A673 (cell line): ENCODE measurements at regions of chr11 and their contacts with region 1.

Region 1: GRCh38 chr11:113994077-113994954 is 19.4 kb downstream of the HTR3A start:
- DNase-seq: peak; percentile 45
- H3K4me3 ChIP-seq: no peak overlapping the region
- H3K27ac ChIP-seq: no peak overlapping the region
- H3K4me1 ChIP-seq: peaks cover 16% of the 10 kb centered on the region
- H3K27me3 ChIP-seq: peaks cover 2% of the 10 kb centered on the region
- CTCF ChIP-seq: peak; percentile 93

Region 2: GRCh38 chr11:113760241-113760640 is 234.1 kb before region 1 on chr11:
- CTCF ChIA-PET with region 1: no interaction called
- POLR2A ChIA-PET with region 1: no interaction called
- intact Hi-C with region 1: no loop called
- DNase-seq: no peak
- H3K4me3 ChIP-seq: no peak overlapping the region
- H3K27ac ChIP-seq: no peak overlapping the region
- H3K4me1 ChIP-seq: no peaks in the 10 kb centered on the region
- H3K27me3 ChIP-seq: no peaks in the 10 kb centered on the region
- CTCF ChIP-seq: no peak

Region 3: GRCh38 chr11:113896156-113896879 is 98.0 kb before region 1 on chr11:
- CTCF ChIA-PET with region 1: interaction called, 4 read pairs
- POLR2A ChIA-PET with region 1: no interaction called
- intact Hi-C with region 1: loop called (anchors 2 kb)
- DNase-seq: peak; percentile 67
- H3K4me3 ChIP-seq: no peak overlapping the region
- H3K27ac ChIP-seq: no peak overlapping the region
- H3K4me1 ChIP-seq: no peaks in the 10 kb centered on the region
- H3K27me3 ChIP-seq: no peaks in the 10 kb centered on the region
- CTCF ChIP-seq: peak; percentile 90

Region 4: GRCh38 chr11:114075891-114076441 is 81.7 kb after region 1 on chr11:
- CTCF ChIA-PET with region 1: no interaction called
- POLR2A ChIA-PET with region 1: no interaction called
- intact Hi-C with region 1: loop called (anchors 5 kb)
- DNase-seq: peak; percentile 88
- H3K4me3 ChIP-seq: no peak overlapping the region
- H3K27ac ChIP-seq: no peak overlapping the region
- H3K4me1 ChIP-seq: peaks cover 85% of the 10 kb centered on the region
- H3K27me3 ChIP-seq: no peaks in the 10 kb centered on the region
- CTCF ChIP-seq: peak; percentile 79